ENCODE measurements at regions of chr5 and their contacts with region 1.

Region 1: GRCh38 chr5:81182396-81183390 is 50.4 kb upstream of the CKMT2 start:
- DNase-seq: no peak
- ATAC-seq: no peak
- H3K4me3 ChIP-seq: no peak overlapping the region
- H3K27ac ChIP-seq: no peak overlapping the region
- H3K4me1 ChIP-seq: no peaks in the 10 kb centered on the region
- H3K27me3 ChIP-seq: no peaks in the 10 kb centered on the region
- CTCF ChIP-seq: no peak

Region 2: DNA sequence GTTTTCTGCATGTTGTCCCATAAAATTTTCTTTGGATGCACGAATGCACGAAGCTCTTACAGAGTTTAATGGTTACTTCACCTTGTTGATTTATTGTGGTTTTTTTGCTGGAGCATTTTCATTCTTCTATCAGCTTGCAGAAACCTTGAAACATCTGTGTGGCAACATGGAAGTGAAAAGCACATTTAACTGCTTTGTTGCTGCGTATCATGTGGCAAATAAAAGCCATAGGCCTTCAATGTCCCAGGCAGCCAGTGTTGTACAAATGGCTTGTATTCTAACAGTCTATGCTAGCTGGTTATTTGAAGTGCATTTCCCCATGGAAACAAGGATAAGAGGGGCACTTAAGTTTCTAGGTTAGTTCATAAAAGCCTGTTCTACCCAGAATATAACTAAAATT is 265.1 kb before region 1 on chr5:
- CTCF ChIA-PET with region 1: no interaction called
- POLR2A ChIA-PET with region 1: interaction called, 14 read pairs
- intact Hi-C with region 1: no loop called
- DNase-seq: no peak
- ATAC-seq: no peak
- H3K4me3 ChIP-seq: no peak overlapping the region
- H3K27ac ChIP-seq: no peak overlapping the region
- H3K4me1 ChIP-seq: no peaks in the 10 kb centered on the region
- H3K27me3 ChIP-seq: no peaks in the 10 kb centered on the region
- CTCF ChIP-seq: no peak

Region 3: DNA sequence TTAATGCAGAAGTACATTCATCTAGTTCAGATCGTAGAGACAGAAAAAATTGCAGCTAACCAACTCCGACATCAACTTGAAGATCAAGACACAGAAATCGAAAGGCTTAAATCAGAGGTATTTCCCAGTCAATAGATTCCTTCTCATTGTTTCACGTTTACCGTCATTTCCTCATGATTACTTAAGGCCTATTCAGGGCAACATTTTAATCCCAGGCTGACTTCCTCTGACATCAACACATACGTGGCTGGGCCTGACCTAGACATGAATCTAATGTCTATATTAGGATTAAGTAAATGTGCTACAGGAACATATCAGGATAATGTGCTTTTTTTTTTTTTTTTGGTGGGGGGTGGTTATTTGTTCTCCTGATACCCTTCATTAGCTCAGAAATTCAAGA is 114.6 kb before region 1 on chr5:
- CTCF ChIA-PET with region 1: no interaction called
- POLR2A ChIA-PET with region 1: no interaction called
- intact Hi-C with region 1: no loop called
- DNase-seq: no peak
- ATAC-seq: no peak
- H3K4me3 ChIP-seq: no peak overlapping the region
- H3K27ac ChIP-seq: no peak overlapping the region
- H3K4me1 ChIP-seq: no peaks in the 10 kb centered on the region
- H3K27me3 ChIP-seq: no peaks in the 10 kb centered on the region
- CTCF ChIP-seq: no peak

Region 4: DNA sequence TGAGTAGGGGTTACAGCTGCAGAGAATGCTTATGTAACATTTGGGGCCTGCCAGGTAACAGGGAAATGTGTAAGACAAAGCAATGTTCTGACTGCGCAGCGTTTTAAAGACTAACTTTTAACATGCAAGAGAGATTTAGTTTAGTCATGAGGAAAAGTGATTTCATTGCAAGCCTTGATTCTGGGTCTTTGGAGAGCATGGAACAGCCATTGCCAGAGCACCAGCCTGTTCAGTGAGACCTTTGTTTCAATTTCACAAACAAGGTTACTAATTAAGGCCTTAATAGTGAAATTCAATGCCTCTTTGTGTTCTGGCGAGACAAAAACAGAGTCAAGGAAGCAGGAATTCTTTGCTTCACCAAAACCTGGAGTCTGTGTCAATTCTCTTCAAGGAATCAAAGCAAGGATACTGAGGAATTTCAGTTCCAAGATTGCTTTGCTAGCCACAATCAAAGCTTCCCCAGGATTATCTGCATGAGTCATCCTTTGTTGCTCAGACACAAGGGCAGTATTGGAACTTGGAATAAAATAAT is 64.8 kb after region 1 on chr5:
- CTCF ChIA-PET with region 1: no interaction called
- POLR2A ChIA-PET with region 1: no interaction called
- intact Hi-C with region 1: no loop called
- DNase-seq: peak; percentile 14
- ATAC-seq: no peak
- H3K4me3 ChIP-seq: no peak overlapping the region
- H3K27ac ChIP-seq: no peak overlapping the region
- H3K4me1 ChIP-seq: peaks cover 17% of the 10 kb centered on the region
- H3K27me3 ChIP-seq: no peaks in the 10 kb centered on the region
- CTCF ChIP-seq: no peak